ENCODE measurements at regions of chr16 and their contacts with region 1.

Region 1: GRCh38 chr16:85126705-85127419 is 14.6 kb upstream of the CIBAR2 start:
- DNase-seq: no peak
- ATAC-seq: no peak

Region 2: DNA sequence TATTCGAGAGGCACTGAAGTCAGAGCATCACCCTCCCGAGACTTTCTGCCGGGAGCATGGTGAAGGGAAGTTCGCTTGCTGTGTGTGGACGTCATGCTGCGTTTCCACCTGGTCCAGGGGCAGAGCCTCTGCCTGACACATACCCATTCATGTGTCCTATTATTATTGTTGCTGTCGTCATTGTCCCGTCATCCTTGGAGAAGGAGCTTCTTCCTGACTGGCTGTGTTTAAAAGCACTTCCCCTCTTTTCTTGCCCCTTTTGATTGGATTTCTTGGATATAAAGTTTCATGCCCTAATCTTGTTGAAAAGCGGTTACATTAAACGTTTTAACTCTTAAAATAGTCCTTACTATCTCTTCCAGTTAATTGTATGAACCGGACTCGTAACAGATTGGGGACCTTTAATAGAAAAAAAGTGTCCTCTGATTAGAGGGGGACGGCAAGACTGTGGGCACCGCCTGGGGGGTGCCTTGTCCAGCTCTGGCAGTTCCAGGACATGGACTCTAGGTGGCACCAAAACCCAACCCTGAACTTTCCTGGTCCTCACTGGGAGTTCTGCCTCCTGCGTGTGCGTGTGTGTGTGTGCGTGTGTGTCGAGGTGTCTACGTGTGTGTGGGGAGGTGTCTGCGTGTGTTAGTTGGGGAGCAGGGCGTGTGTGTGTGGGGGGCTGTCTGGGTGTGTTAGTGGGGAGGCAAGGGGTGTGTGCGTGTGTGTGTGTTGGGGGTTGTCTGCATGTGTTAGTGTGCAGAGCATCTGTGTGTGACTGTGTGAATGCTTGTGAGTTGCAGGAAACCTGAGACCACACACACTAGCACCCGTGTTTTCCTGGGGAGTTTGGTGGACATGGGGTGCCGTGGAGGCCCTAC is 118.7 kb after region 1 on chr16:
- intact Hi-C with region 1: loop called in 1 of 2 experiments (anchors 10 kb)
- DNase-seq: peak; percentile 49 to 58
- ATAC-seq: peak; percentile 70